Aorta (tissue), 5 donors: ENCODE measurements at regions of chr10 and their contacts with region 1.

Region 1: GRCh38 chr10:13271552-13272163 is 28.2 kb downstream of the PHYH start:
- DNase-seq: peak in 1 of 2 donors; percentile 76
- ATAC-seq: peak; percentile 53
- H3K4me3 ChIP-seq: no peak overlapping the region
- H3K27ac ChIP-seq: no peak overlapping the region
- H3K4me1 ChIP-seq: peaks cover 0 to 2% of the 10 kb centered on the region in 2 donors
- H3K27me3 ChIP-seq: no peaks in the 10 kb centered on the region

Region 2: DNA sequence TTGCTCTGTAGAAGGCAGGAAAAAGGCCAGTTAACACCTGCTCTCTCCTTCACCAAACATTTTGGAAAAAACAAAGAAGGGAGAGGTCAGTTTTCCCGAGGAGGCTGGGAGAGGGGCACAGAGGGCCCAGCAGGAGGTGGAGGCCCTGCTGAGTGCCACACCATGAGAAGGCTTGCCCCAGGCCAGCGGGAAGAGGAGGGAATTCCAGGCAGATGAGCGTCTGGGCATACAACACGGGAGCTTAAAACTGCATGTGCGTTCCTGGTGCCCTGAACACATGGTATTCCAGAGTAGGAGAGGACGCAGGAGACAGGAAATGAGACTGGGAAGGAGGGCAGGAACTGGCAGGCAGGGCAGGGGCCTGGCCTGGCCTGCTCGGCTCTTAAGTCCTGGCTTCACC is 452.6 kb before region 1 on chr10:
- intact Hi-C with region 1: no loop called
- DNase-seq: no peak
- ATAC-seq: no peak
- H3K4me3 ChIP-seq: no peak overlapping the region
- H3K27ac ChIP-seq: no peak overlapping the region
- H3K4me1 ChIP-seq: peaks cover 0 to 2% of the 10 kb centered on the region in 2 donors
- H3K27me3 ChIP-seq: no peaks in the 10 kb centered on the region

Region 3: GRCh38 chr10:12971001-12971788 is 300.5 kb before region 1 on chr10:
- intact Hi-C with region 1: no loop called
- DNase-seq: peak in 1 of 2 donors; percentile 69
- ATAC-seq: peak; percentile 85
- H3K4me3 ChIP-seq: no peak overlapping the region
- H3K27ac ChIP-seq: peak overlapping the region in 1 of 2 donors; percentile 7
- H3K4me1 ChIP-seq: no peaks in the 10 kb centered on the region
- H3K27me3 ChIP-seq: no peaks in the 10 kb centered on the region

Region 4: GRCh38 chr10:13160934-13161856 is 110.5 kb before region 1 on chr10 and contains the start of gene MCM10:
- intact Hi-C with region 1: loop called in 1 of 2 experiments (anchors 10 kb)
- DNase-seq: peak; percentile 99
- ATAC-seq: peak; percentile 100
- H3K4me3 ChIP-seq: no peak within 1 kb of the TSS
- H3K27ac ChIP-seq: no peak within 1 kb of the TSS
- H3K4me1 ChIP-seq: no peaks in the 10 kb centered on the region
- H3K27me3 ChIP-seq: no peaks in the 10 kb centered on the region
- total RNA-seq, gene MCM10: 0.78 to 0.81 TPM

Region 5: DNA sequence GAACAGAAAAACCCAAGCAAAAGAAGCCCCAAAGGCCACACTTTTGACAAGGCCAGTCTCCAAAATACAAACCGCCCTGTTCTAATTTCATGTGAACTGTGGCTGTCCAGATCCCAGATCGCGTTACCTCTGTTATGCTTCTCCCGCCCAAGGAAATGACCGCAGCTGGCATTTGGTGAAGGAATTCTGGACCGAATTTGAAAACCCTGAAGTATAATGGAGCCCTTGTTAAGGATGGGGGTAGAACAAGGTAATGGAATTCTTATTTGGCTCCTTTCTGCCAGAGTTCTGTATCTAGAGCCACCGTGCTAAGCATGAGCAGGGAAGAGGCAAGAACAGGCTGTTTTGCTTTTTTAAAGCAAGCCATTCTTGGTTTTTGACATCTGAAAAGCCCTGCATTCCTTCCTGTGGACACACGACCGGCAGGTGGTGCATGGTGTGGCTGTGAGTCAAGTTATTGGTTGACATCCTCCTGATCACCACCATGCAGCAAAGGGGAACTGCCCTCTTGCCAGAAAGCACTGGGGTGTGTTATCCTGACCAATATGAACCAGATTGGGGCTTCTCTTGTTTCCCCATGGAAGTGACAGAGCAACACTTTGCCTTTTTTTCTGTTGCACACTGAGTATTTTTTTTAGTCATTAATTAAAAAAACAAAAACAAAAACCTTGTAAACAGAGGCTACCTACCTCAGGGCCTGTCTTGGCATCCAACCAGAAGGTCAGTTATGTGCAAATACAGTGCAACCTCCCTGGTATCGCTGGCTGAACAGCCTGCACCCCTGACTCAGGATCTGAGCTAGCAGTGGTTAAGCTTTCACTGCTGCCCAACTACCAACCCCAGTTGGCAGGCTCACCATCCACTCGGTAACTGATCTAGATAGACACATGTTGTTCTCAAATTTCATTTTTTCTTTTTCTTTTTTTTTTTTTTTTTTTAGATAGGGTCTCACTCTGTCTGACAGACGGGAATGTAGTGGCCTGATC is 51.7 kb before region 1 on chr10:
- intact Hi-C with region 1: no loop called
- DNase-seq: no peak
- ATAC-seq: no peak
- H3K4me3 ChIP-seq: no peak overlapping the region
- H3K27ac ChIP-seq: no peak overlapping the region
- H3K4me1 ChIP-seq: no peaks in the 10 kb centered on the region
- H3K27me3 ChIP-seq: no peaks in the 10 kb centered on the region